ENCODE measurements at regions of chr10 and their contacts with region 1.

Region 1: DNA sequence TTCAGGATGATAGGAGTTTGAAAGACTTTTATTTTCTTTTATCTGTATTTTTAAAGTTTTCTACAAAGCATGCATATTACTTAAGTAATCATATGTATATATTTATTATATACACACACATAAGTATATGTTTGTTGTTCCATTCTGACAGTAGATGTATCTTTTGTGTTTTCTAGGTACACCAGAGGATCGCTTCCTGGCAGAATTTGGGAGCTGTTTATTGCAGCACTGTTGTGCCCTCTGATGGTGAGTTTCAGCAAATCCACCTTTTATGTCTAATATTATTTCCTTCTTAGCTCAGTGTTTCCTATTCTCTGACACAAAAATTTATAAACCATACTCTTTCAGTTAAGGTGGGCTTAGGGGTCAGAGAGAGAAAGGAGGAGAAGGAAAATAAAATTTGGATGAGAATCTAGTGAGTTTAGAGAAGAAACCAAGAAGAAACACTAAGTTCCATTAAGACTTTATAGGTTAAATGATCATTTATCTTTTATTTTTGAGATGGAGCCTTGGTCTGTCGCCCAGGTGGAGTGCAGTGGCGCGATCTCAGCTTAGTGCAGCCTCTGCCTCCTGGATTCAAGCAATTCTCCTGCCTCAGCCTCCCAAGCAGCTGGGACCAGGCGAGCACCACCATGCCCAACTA is 59.2 kb upstream of the OIT3 start:
- DNase-seq: peak; percentile 98
- ATAC-seq: peak; percentile 86
- H3K4me3 ChIP-seq: peak overlapping the region; percentile 1; the same call in 1 of the 2 replicates
- H3K27ac ChIP-seq: no peak overlapping the region
- H3K4me1 ChIP-seq: no peaks in the 10 kb centered on the region
- H3K27me3 ChIP-seq: peaks cover 31% of the 10 kb centered on the region
- CTCF ChIP-seq: peak; percentile 100

Region 2: DNA sequence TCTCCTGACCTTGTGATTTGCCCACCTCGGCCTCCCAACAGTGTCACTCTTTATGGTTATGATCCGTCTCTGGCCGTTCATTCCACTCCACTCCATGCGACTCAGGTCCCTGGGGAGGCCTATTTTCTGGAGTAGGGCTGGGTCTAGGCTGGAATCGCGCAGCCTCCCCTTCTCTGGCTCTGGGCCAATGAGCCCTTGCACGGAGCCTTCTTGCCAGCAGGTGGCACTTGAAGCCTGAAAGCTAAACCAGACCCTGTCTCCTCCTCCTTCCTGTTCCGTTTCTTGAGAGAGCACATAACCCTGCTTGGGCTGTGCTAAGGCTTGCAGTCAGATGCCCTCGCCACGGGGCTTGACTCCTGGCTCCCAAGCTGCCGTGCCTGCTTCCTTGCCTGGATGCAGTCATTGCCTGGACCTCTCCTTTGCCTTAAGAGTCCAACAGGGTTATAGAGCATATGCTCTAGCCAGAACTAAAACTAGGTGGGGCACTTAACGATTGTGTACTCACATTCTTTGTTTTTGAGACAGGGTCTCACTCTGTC is 470.0 kb before region 1 on chr10:
- CTCF ChIA-PET with region 1: no interaction called
- POLR2A ChIA-PET with region 1: no interaction called
- intact Hi-C with region 1: loop called (anchors 1 kb)
- DNase-seq: peak; percentile 88
- ATAC-seq: peak; percentile 98
- H3K4me3 ChIP-seq: no peak overlapping the region; the same call in 1 of the 2 replicates
- H3K27ac ChIP-seq: peak overlapping the region; percentile 26; the same call in 1 of the 2 replicates
- H3K4me1 ChIP-seq: peaks cover 12% of the 10 kb centered on the region
- H3K27me3 ChIP-seq: no peaks in the 10 kb centered on the region
- CTCF ChIP-seq: peak; percentile 81

Region 3: DNA sequence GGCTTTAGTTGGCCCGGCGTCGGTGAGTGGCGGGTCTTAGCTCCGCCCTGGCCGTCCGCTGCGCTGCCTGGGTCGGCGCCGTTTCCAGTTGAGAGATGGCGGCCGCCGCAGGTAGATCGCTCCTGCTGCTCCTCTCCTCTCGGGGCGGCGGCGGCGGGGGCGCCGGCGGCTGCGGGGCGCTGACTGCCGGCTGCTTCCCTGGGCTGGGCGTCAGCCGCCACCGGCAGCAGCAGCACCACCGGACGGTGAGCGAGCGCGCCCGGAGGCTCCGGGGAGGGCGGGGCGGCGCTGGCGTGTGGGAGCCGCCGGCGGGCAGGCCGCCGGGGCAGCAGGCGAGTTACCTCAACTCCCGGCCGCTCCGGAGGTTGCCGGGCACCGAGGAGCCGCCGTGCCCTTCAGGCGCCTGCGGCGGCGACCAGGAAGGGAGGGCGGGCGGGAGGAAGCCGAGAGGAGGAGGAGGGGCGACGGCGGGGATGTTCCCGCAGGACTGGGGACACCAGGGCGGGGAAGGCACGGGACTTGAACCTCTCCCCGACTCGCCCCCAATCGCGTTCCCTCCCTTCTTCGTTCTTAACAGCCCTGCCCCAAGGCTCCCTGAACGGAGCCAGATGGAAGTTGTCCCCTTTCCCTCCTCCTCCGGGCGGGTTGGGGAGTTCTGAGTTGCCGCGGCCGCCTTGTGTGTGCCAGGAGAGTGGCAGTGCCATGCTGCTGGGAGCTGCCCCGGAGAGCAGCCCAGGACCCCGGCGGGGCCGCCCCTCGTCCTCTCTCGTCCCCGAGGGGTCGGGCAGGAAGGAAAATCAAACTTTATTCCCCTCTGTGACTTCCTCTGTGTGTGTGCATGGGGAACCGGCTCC is 142.0 kb before region 1 on chr10 and contains the start of gene MCU:
- CTCF ChIA-PET with region 1: interaction called, 5 read pairs
- POLR2A ChIA-PET with region 1: no interaction called
- intact Hi-C with region 1: loop called (anchors 1 kb)
- DNase-seq: peak; percentile 89
- ATAC-seq: peak; percentile 88
- H3K4me3 ChIP-seq: peak within 1 kb of the TSS; percentile 94
- H3K27ac ChIP-seq: no peak within 1 kb of the TSS; the same call in 1 of the 2 replicates
- H3K4me1 ChIP-seq: peaks cover 49% of the 10 kb centered on the region
- H3K27me3 ChIP-seq: no peaks in the 10 kb centered on the region
- CTCF ChIP-seq: no peak
- total RNA-seq, gene MCU: 16.4 and 21.5 TPM in 2 replicates

Region 4: DNA sequence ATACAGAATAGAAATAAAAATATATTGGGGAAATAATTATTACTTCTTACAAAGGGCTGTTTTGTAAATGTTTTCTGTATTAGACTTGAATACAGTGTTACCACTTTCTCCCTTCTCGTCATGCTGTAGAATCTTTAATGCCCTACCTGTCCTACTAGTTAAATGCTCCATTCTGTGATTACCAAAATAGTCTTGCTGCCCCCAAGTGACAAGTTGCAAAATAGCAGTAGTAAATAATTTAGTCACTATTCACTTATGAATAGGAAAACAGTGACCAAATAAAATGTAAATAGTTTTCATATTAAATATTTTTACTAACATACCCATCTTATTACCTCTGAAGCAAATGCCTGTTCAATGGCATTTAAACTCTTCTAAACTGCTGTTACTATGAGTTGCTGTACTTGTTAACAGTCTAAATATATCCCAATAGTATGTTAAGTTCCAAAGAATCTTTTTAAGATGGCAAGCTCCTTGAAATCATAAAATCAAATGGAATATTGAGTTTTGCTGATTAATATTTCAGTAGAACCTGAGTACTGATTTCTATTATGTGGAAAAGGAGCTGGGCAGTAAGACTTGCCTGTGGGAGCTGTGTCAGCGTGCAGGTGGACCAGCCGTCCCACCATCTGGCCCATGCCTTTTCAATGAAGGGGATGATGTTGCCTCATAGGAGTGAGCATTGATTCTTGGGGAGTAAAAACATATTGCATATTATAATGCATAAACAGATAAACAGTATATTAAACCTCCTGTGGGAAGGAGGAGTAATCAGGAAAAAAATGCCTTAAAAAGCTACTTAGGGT is 41.1 kb after region 1 on chr10:
- CTCF ChIA-PET with region 1: interaction called, 4 read pairs
- POLR2A ChIA-PET with region 1: interaction called, 8 read pairs
- intact Hi-C with region 1: loop called (anchors 1 kb)
- DNase-seq: peak; percentile 98
- ATAC-seq: peak; percentile 86
- H3K4me3 ChIP-seq: no peak overlapping the region
- H3K27ac ChIP-seq: no peak overlapping the region
- H3K4me1 ChIP-seq: peaks cover 3% of the 10 kb centered on the region; the same call in 1 of the 2 replicates
- H3K27me3 ChIP-seq: peaks cover 30% of the 10 kb centered on the region
- CTCF ChIP-seq: peak; percentile 100

Region 5: DNA sequence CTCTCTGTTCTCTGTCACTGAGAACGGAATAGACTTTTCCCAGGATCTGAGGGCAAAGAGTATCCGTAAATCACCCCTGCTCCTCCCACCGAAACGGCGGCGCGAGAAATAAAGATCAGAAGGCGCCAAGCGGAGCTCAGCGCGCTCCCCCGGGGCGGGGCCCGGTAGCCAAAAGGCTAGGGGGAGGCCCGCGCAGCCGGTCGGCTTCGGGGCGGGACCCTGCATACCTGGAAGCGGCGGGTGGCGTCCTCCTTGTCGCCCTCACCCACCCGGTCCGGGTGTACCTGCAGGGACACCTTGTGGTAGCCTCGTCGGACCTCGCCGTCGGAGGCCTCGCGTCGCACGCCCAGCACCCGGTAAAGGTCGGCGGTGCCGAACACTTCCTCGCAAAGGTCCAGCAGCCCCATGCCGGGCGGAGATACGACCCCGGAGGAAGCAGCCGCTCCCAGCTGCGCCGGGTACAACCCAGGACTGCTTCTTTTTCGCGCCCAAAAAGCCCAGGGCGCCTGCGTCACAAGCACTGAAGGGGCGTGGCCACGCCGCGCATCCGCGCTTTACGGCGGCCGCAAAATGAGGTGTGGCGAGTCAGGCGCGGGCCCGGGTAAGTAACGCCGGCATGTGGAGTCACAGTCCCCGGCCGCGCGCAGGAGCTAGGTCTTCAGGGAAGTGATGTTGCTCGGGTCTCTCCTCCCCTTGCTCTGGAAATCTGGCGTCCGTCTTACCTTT is 412.6 kb after region 1 on chr10 and contains the start of gene DNAJC9:
- CTCF ChIA-PET with region 1: no interaction called
- POLR2A ChIA-PET with region 1: interaction called, 17 read pairs
- intact Hi-C with region 1: no loop called
- DNase-seq: peak; percentile 100
- ATAC-seq: peak; percentile 84
- H3K4me3 ChIP-seq: peak within 1 kb of the TSS; percentile 69
- H3K27ac ChIP-seq: peak within 1 kb of the TSS; percentile 80
- H3K4me1 ChIP-seq: peaks cover 50% of the 10 kb centered on the region
- H3K27me3 ChIP-seq: no peaks in the 10 kb centered on the region
- CTCF ChIP-seq: peak; percentile 56
- total RNA-seq, gene DNAJC9: 282 and 283 TPM in 2 replicates

Region 6: GRCh38 chr10:73358331-73359279 is 524.3 kb after region 1 on chr10 and contains the start of gene CFAP70:
- CTCF ChIA-PET with region 1: interaction called, 6 read pairs
- POLR2A ChIA-PET with region 1: no interaction called
- intact Hi-C with region 1: loop called (anchors 5 kb)
- DNase-seq: peak; percentile 100
- ATAC-seq: peak; percentile 93
- H3K4me3 ChIP-seq: peak within 1 kb of the TSS; percentile 66
- H3K27ac ChIP-seq: no peak within 1 kb of the TSS
- H3K4me1 ChIP-seq: peaks cover 16% of the 10 kb centered on the region
- H3K27me3 ChIP-seq: peaks cover 9% of the 10 kb centered on the region
- CTCF ChIP-seq: no peak
- total RNA-seq, gene CFAP70: 0.73 and 0.92 TPM in 2 replicates